AG04449 (cell line): ENCODE measurements at regions of chr17 and their contacts with region 1.

Region 1: GRCh38 chr17:8785547-8786413 is 13.4 kb downstream of the MFSD6L start:
- DNase-seq: no peak
- H3K4me3 ChIP-seq: no peak overlapping the region
- CTCF ChIP-seq: peak; percentile 88

Region 2: DNA sequence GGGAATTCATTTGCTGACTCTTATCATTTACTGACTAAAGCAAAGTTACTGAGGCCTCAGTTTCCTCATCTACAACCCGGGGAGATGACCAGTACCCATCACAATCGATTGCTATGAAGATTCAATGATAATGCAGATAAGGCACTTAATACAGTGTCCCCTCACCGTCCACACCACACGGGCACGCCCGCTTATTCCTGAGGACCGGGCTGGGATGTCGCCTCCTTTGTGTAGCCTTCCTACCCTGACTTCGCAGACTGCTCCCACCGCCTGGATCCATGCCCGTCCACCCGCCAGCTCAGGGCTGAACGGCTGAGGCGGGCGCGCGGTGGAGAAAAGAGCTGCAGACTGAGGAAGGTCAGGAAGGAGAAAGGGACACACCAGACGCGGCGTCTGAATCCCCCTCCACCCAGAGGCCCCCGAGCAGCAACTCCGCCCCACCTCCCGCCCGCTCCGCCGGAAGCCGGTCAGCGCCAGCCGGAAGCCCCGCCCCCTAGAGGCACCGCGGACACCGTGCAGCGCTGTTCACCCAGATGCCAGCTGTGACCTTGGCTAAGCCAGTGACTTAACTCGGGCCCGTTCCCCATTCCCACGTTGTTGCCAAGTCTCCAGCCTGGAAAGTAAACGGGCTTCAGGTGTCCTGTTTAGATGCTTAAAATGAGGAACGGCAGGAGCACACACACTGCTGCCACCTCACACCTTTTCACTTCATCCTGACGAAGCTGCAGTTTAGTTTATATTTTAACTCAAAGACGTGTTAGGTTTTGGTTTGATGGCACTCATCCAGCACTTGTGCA is 409.3 kb before region 1 on chr17 and contains the start of gene KRABD2:
- CTCF ChIA-PET with region 1: interaction called, 11 read pairs
- POLR2A ChIA-PET with region 1: no interaction called
- DNase-seq: no peak
- H3K4me3 ChIP-seq: peak within 1 kb of the TSS; percentile 83
- CTCF ChIP-seq: peak; percentile 90

Region 3: GRCh38 chr17:8409966-8410864 is 375.6 kb before region 1 on chr17:
- CTCF ChIA-PET with region 1: interaction called, 94 read pairs
- POLR2A ChIA-PET with region 1: interaction called, 3 read pairs
- DNase-seq: peak; percentile 23
- H3K4me3 ChIP-seq: no peak overlapping the region; the same call in 1 of the 2 replicates
- CTCF ChIP-seq: peak; percentile 85

Region 4: GRCh38 chr17:8658810-8659209 is 127.0 kb before region 1 on chr17:
- CTCF ChIA-PET with region 1: no interaction called
- POLR2A ChIA-PET with region 1: no interaction called
- DNase-seq: no peak
- H3K4me3 ChIP-seq: no peak overlapping the region
- CTCF ChIP-seq: no peak

Region 5: GRCh38 chr17:8727065-8727511 is 58.7 kb before region 1 on chr17:
- CTCF ChIA-PET with region 1: no interaction called
- POLR2A ChIA-PET with region 1: no interaction called
- DNase-seq: no peak
- H3K4me3 ChIP-seq: no peak overlapping the region
- CTCF ChIP-seq: no peak

Region 6: GRCh38 chr17:8753976-8754440 is 31.8 kb before region 1 on chr17:
- CTCF ChIA-PET with region 1: interaction called, 29 read pairs
- POLR2A ChIA-PET with region 1: no interaction called
- DNase-seq: no peak
- H3K4me3 ChIP-seq: no peak overlapping the region
- CTCF ChIP-seq: peak; percentile 24

Region 7: DNA sequence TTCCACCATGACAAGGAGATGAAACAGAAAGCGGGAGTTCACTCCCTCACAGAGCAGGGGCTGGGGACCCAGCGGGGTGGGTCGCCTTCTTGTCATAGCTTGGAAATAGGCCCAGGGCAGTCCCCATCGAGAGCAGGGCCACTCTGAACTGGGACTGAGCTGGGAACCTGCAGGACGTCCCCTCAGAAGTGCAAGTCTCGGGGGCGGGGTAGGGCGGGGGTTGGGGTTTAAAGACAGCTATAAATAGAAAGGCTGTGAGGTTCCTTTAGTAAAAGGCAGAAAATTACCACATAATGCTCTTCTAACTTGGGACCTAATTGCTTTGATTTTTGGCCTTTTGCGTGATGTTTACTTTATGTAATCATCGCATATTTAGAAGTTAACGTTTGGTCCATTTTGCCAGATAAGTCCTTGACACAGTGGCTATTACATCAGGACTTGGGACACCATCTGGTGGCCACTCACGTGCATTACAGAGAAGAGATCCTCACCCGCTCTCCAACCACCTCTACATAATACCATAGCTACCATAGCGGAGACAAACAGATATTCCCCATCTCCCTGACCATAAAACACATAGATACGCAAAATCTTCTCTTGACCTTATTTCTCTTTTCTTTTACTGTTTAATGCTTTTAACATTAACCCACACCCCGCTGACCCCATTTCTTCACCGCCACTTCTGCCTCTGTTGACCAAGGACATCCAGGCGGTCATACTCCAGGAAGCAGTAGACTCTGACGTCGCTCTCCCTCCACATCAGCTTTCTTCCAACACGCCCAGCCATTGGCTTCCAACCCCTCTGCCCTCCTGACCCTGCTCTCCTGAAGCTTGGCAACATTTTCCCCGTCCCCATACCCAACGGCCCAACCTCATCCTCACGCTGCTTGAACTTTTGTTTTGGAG is 109.1 kb after region 1 on chr17:
- CTCF ChIA-PET with region 1: interaction called, 24 read pairs
- POLR2A ChIA-PET with region 1: no interaction called
- DNase-seq: peak; percentile 16
- H3K4me3 ChIP-seq: peak overlapping the region; percentile 34
- CTCF ChIP-seq: peak; percentile 74